ENCODE measurements at regions of chr15 and their contacts with region 1.

Region 1: GRCh38 chr15:62847900-62848489 is 194.6 kb upstream of the TPM1 start:
- DNase-seq: peak; percentile 85
- ATAC-seq: peak; percentile 77

Region 2: DNA sequence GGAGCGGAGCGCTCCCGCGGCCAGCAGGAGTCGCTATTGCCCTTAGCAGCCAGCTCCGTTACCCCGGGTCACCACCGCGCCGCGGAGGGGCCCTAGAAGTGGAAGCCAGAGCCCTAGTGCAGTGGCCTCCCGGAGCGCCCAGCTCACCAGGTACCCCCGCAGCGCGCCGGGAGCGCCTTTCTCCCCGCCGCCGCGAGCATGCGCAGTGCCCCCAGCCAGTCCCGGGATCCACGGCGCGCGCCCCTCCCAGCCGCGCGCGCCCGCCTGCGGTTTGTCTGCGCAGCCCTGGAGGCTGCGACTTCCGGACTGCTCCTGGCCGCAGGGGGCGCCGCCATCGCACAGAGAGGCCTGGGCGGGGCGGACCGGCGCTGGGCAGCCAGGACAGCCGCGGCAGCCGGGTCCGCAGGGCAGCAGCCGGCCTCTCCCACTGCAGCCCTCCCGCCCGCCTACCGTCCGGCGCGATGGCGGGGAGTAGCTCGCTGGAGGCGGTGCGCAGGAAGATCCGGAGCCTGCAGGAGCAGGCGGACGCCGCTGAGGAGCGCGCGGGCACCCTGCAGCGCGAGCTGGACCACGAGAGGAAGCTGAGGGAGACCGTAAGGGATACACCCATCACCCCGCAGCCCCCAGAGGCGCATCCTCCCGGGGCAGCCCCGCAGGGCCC is 200.2 kb after region 1 on chr15:
- intact Hi-C with region 1: loop called (anchors 10 kb)
- DNase-seq: peak; percentile 95
- ATAC-seq: peak; percentile 74

Region 3: DNA sequence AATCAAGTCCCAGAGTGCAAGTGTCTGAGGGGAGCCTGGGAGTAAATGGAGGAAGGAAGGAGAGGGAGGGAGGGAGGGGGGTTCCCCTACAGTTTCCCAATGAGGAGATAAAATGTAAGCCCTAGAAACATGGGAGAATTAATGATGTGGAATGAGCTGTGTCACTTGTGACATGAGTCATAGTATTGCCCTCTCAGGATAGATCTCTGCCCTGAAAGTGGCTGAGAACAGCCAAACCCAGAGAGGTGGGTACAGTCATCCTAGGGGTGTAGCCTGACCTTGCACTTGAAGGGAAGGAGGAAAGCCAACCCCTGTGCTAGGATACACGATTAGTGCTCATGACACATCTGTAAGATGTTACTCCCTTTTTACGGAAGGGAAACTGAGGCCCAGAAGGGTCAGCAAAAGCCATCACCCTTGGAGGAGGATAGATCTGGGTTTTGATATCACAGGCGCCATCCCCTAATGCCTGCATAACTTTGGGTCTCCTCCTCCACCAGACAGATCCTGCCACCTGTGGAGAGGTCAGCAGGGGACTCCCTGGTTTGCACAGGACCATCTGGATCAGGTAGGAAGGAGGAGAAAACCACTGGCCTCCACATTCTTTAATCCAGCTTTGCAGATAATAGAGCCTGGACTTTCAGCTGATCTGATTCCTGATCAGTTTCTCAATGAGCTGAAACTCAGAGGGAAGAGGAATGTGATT is 633.3 kb after region 1 on chr15:
- intact Hi-C with region 1: no loop called
- DNase-seq: no peak
- ATAC-seq: no peak